Psoas muscle (tissue), 8 donors: ENCODE measurements at regions of chr2 and their contacts with region 1.

Region 1: DNA sequence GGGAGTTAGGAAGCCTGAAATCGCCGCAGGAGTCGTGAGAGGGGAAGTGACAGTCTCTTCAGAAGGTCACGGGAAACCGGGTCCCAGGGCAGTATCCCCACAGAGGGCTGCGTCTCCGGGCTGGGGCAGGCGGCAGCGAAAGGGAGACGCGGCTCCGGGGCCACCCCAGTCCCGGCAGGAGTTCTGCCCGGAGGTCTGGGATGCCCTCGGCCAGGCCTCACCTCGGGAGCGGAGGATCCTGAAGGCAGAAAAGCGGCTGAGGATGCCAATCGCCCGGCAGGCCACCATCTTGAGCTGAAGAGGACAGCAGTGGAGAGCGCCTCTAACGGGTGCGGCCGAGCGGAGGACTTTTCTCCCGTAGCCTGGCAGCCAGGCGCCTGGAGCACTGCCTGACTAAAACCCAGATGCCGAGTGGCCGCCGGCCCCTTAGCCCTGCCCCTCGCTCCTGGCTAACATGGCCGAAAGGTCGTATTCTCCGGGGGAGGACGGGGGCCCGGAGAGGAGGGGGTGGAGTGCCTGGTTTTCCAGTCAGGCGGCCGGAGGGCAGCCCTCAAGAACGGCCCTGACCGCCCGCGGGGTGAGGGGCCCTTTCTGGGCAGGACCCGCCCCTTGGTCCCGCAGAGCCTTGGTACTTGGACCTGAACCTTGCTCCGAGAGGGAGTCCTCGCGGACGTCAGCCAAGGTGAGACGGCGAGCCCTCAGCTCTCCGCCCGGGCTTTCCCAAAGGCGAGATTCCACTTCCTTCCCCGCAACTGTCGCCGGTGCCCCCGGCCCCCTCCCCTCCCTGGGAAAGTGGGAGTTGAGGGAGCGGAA is at the starts of genes HADHA and HADHB:
- DNase-seq: peak; percentile 93 to 96
- ATAC-seq: peak; percentile 83 to 90 (median 86)
- H3K4me3 ChIP-seq: peak within 1 kb of the TSS; percentile 79
- H3K27ac ChIP-seq: peak within 1 kb of the TSS; percentile 96
- H3K4me1 ChIP-seq: peaks cover 67% of the 10 kb centered on the region
- H3K27me3 ChIP-seq: no peaks in the 10 kb centered on the region
- CTCF ChIP-seq: no peak
- total RNA-seq, gene HADHA: 294 to 617 (median 391) TPM
- total RNA-seq, gene HADHB: 562 to 1,153 (median 698) TPM

Region 2: DNA sequence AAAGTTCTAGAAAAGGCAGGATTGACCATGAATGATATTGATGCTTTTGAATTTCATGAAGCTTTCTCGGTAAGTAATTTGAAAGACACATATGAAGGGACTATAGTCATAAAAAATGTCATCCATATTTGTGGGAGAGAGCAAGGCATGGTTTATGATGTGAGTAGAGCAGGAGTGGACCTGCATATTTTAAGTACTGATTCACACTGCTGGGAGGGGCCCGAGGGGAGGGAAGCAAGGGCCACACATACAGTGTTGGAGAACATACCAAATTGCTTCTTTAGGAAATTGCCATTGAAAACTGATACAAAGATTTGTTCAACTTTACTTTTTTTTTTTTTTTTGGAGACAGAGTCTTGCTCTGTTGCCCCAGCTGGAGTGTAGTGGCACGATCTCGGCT is 39.6 kb after region 1 on chr2:
- intact Hi-C with region 1: loop called in 1 of 2 experiments (anchors 5 kb)
- DNase-seq: no peak
- ATAC-seq: peak in 2 of 4 donors; percentile 26 to 41
- H3K4me3 ChIP-seq: no peak overlapping the region
- H3K27ac ChIP-seq: no peak overlapping the region
- H3K4me1 ChIP-seq: no peaks in the 10 kb centered on the region
- H3K27me3 ChIP-seq: no peaks in the 10 kb centered on the region
- CTCF ChIP-seq: no peak

Region 3: DNA sequence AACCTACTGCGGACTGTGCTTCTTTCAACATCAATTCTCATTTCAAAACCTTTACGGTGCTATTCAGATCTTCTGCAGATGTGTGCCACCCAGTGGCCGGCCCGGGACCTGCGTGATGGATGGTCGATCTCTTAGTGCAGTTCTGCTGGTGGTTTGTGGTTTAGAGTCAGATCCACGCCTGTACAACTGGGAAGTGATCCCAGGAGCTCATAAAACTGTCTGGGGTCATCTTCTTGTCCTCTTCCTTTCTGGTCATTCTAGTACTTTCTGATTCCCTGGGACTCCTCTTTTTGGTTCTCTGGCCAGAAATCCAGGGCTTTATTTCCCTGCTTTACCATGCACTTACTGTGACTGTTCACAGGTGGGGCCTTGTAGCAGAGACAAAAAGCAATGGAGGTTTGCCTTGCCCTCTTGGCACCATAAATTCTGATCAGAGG is 85.6 kb after region 1 on chr2:
- intact Hi-C with region 1: loop called (anchors 5 kb)
- DNase-seq: peak; percentile 90 to 93
- ATAC-seq: peak; percentile 91 to 98 (median 95)
- H3K4me3 ChIP-seq: no peak overlapping the region
- H3K27ac ChIP-seq: no peak overlapping the region
- H3K4me1 ChIP-seq: peaks cover 3% of the 10 kb centered on the region
- H3K27me3 ChIP-seq: no peaks in the 10 kb centered on the region
- CTCF ChIP-seq: peak; percentile 86